Mammary epithelial cell (primary cell): ENCODE measurements at regions of chr16 and their contacts with region 1.

Region 1: DNA sequence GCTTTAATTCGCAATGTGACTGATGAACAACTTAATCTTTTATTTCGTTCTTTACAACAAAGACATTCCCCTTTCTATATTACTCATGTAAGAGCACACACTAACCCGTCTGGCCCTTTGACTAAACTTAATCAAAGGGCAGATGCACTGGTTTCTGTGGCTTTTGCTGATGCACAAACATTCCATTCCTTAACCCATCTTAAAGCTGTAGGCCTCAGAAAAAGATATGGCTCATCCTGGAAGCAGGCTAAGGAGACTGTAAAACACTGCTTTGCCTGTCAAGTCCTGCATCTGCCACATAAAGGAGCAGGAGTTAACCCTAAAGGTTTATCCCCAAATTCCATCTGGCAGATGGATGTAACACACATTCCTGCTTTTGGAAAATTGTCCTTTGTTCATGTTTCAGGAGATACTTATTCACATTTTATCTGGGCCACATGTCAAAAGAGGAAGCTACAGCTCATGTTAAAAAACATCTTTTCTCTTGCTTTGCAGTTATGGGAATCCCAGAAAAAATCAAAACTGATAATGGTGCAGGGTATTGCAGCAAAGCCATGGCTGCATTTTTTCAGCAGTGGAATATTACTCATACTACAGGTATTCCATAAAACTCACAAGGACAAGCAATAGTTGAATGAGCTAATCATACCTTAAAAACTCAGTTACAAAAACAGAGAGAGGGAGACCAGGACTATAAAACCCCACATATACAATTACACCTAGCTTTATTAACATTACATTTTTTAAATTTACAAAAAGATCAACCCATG is 137.2 kb downstream of the AHSP start:
- DNase-seq: peak; percentile 90
- H3K4me3 ChIP-seq: peak overlapping the region in 1 of 3 experiments; percentile 13
- H3K27ac ChIP-seq: peak overlapping the region; percentile 74
- H3K4me1 ChIP-seq: peaks cover 19% of the 10 kb centered on the region
- H3K27me3 ChIP-seq: no peaks in the 10 kb centered on the region
- CTCF ChIP-seq: no peak

Region 2: DNA sequence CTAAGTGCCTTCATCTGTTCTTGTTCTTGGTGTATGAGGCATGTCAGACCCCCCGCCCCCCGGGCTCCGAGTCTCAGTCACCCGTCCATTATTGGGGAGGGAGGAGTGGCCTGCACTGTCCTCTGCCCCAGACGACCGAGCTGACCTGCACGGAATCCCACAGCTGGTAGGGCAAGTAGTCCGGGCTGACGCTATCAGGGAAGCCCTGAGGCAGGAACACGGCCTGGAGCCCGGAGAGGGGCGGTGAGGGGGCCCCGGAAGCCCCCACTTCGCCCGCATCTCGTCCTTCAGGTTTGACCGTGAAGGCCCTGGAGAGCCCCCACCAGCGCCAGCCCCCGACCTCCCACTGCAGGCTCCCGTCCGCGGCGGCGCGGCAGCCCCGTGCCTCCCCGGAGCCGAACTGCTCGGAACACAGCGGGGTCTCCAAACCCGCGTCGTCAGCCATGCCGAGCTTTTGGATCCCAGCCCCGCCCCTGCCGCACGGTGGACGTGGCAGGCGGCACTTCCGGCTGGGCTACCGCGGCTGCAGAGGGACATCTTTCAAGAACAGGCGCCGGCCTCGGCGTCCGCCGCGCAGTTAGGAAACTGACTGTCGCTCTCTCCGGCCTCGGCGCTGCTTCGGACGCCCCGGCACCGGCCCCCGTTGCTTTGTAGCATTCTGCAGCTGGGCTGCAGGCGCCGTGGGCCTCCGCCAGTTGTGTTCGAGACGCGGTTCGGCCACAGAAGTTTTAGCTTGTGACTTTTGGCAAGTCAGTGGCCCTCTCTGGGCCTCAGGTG is 156.8 kb before region 1 on chr16 and contains the start of gene RUSF1:
- CTCF ChIA-PET with region 1: no interaction called
- dilution Hi-C with region 1: no loop called
- in situ Hi-C with region 1: no loop called
- intact Hi-C with region 1: loop called (anchors 1 kb)
- DNase-seq: peak; percentile 79
- H3K4me3 ChIP-seq: peak within 1 kb of the TSS; percentile 92 to 99 (median 99)
- H3K27ac ChIP-seq: peak within 1 kb of the TSS; percentile 71
- H3K4me1 ChIP-seq: peaks cover 10% of the 10 kb centered on the region
- H3K27me3 ChIP-seq: no peaks in the 10 kb centered on the region
- CTCF ChIP-seq: no peak
- total RNA-seq, gene RUSF1: 40.5 to 46.5 TPM

Region 3: GRCh38 chr16:31718998-31719397 is 54.1 kb after region 1 on chr16:
- CTCF ChIA-PET with region 1: no interaction called
- dilution Hi-C with region 1: no loop called
- in situ Hi-C with region 1: no loop called
- intact Hi-C with region 1: no loop called
- DNase-seq: no peak
- H3K4me3 ChIP-seq: no peak overlapping the region
- H3K27ac ChIP-seq: no peak overlapping the region
- H3K4me1 ChIP-seq: peaks cover 15% of the 10 kb centered on the region
- H3K27me3 ChIP-seq: no peaks in the 10 kb centered on the region
- CTCF ChIP-seq: no peak